ENCODE measurements at regions of chr19 and their contacts with region 1.

Region 1: GRCh38 chr19:49570138-49570856 is 10.1 kb downstream of the NOSIP start:
- DNase-seq: peak; percentile 41 to 82 (median 80)
- H3K4me3 ChIP-seq: no peak overlapping the region
- H3K4me3 Mint-ChIP-seq: peak overlapping the region; percentile 62 to 86 (median 67)
- H3K27ac ChIP-seq: peak overlapping the region; percentile 29
- H3K27ac Mint-ChIP-seq: peak overlapping the region; percentile 87 to 96 (median 94)
- H3K4me1 ChIP-seq: peaks cover 57% of the 10 kb centered on the region
- H3K4me1 Mint-ChIP-seq: peaks cover 42 to 62% (median 56%) of the 10 kb centered on the region in 3 donors
- H3K27me3 ChIP-seq: no peaks in the 10 kb centered on the region
- H3K27me3 Mint-ChIP-seq: no peaks in the 10 kb centered on the region

Region 2: DNA sequence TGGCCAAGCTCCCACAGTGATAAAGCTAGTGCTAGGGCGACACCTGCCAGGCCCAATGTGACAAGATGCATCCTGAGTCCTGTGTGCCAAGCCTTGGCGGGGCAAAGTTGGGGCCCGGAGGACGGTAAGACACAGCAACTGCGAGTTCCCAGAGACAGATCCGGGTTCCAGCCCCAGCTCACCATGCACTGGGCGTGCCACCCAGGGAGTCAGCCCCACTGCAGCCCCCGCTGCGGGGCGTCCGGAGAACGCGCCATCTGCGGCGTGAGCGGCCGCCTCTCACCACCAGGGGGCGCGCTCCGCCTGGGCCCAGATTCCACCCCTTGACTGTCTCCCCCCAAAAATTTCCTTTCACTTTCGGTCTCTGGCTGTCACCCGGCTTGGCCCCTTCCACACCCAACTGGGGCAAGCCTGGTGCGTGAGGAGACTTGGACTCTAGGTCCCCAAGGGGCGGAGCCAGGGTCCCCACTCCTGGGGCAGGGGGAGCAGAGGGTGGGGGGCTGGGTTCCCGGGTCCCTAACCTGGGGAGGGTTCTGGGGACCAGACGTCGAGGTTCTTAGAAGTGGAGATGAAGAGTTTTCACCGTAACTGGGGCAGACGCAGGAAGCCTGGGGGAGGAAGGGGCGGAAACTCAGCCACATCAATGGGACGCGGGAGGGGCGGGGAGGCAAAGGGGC is 96.3 kb before region 1 on chr19 and contains the start of gene FLT3LG:
- CTCF ChIA-PET with region 1: interaction called, 22 read pairs
- POLR2A ChIA-PET with region 1: interaction called, 4 read pairs
- DNase-seq: peak; percentile 84 to 98 (median 92)
- H3K4me3 ChIP-seq: peak within 1 kb of the TSS; percentile 75
- H3K4me3 Mint-ChIP-seq: peak within 1 kb of the TSS; percentile 90 to 98 (median 95)
- H3K27ac ChIP-seq: peak within 1 kb of the TSS; percentile 74
- H3K27ac Mint-ChIP-seq: peak within 1 kb of the TSS; percentile 95 to 100 (median 98)
- H3K4me1 ChIP-seq: peaks cover 61% of the 10 kb centered on the region
- H3K4me1 Mint-ChIP-seq: peaks cover 44 to 65% (median 48%) of the 10 kb centered on the region in 3 donors
- H3K27me3 ChIP-seq: no peaks in the 10 kb centered on the region
- H3K27me3 Mint-ChIP-seq: peaks cover 0 to 4% of the 10 kb centered on the region in 2 donors
- total RNA-seq, gene FLT3LG: 63.9 to 71.5 TPM

Region 3: DNA sequence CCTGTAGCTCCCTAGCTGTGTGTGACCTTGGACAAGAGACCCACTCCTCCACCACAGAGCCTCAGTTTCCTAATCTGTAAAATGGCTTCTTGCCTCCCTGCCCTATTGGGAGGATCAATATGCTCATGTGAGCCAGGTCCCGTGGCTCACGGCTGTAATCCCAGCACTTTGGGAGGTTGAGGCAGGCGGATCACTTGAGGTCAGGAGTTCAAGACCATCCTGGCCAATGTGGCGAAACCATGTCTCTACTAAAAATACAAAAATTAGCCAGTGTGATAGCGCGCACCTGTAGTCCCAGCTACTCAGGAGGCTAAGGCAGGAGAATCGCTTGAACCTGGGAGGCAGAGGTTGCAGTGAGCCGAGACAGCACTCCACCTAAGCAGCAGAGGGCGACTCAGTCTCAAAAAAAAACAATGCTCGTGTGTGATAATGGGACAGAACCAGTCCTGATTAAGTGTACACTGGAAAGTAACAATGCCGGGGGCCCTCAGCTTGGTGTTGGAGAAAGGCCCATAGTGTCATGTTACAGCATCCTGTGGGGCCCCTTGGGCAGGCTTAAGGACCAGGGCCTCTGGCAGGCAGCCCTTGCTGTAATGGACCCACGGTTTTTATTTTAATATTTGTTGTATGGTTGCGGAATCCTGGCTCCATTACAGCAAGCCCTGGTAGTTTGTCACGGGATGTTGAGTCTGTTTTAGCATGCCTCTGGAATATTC is 67.3 kb before region 1 on chr19:
- CTCF ChIA-PET with region 1: interaction called, 6 read pairs
- POLR2A ChIA-PET with region 1: interaction called, 15 read pairs
- DNase-seq: peak in 3 of 5 donors; percentile 21 to 59 (median 59)
- H3K4me3 ChIP-seq: no peak overlapping the region
- H3K4me3 Mint-ChIP-seq: peak overlapping the region in 6 of 7 donors; percentile 5 to 45 (median 24)
- H3K27ac ChIP-seq: no peak overlapping the region
- H3K27ac Mint-ChIP-seq: peak overlapping the region; percentile 88 to 99 (median 96)
- H3K4me1 ChIP-seq: peaks cover 44% of the 10 kb centered on the region
- H3K4me1 Mint-ChIP-seq: peaks cover 38 to 48% (median 44%) of the 10 kb centered on the region in 3 donors
- H3K27me3 ChIP-seq: no peaks in the 10 kb centered on the region
- H3K27me3 Mint-ChIP-seq: peaks cover 0 to 10% of the 10 kb centered on the region in 2 donors

Region 4: GRCh38 chr19:49546825-49547565 is 23.3 kb before region 1 on chr19:
- CTCF ChIA-PET with region 1: interaction called, 128 read pairs
- POLR2A ChIA-PET with region 1: interaction called, 23 read pairs
- DNase-seq: peak; percentile 41 to 76 (median 73)
- H3K4me3 ChIP-seq: peak overlapping the region; percentile 45
- H3K4me3 Mint-ChIP-seq: peak overlapping the region in 6 of 7 donors; percentile 5 to 84 (median 73)
- H3K27ac ChIP-seq: no peak overlapping the region
- H3K27ac Mint-ChIP-seq: peak overlapping the region in 7 of 8 donors; percentile 15 to 85 (median 77)
- H3K4me1 ChIP-seq: peaks cover 52% of the 10 kb centered on the region
- H3K4me1 Mint-ChIP-seq: peaks cover 21 to 30% (median 28%) of the 10 kb centered on the region in 3 donors
- H3K27me3 ChIP-seq: no peaks in the 10 kb centered on the region
- H3K27me3 Mint-ChIP-seq: peaks cover 0 to 1% of the 10 kb centered on the region in 2 donors

Region 5: DNA sequence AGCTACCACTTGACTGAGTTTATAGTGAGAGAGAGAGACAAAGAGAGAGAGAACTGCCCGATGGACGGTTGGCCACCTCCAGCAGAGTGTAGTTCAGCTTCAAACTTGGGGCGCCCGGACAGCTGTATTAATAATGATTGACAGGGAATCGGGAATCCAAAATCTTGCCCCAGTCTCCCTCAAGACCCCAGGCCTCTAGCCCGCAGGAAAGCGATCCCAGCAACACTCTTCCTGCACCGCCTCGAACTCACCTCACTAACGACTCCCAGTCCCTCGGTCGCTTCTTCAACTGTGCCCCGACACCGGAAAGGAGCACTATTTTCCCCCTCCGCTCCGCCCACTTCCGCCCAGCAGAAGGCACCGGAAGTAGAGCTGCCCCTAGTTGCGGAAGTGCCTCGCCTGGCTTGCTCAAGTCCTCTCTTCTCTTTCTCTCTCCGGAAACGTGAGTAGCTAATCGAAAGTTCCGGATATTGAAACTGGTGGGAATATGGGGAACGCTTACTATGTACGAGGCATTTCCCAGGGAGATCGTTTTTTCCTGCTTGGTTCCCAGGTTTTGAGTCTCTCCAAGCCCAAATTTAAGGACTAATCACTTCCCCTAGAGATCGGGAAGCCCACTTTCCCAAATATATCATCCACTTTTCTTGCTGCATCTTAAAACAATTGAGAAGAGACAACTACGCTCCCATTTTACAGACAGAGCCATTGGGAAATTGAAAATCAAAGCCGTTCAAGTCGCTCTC is 10.1 kb after region 1 on chr19 and contains the start of gene NOSIP:
- CTCF ChIA-PET with region 1: interaction called, 29 read pairs
- POLR2A ChIA-PET with region 1: interaction called, 3 read pairs
- DNase-seq: peak; percentile 92 to 97 (median 93)
- H3K4me3 ChIP-seq: peak within 1 kb of the TSS; percentile 93
- H3K4me3 Mint-ChIP-seq: peak within 1 kb of the TSS; percentile 90 to 95 (median 94)
- H3K27ac ChIP-seq: peak within 1 kb of the TSS; percentile 78
- H3K27ac Mint-ChIP-seq: peak within 1 kb of the TSS; percentile 65 to 98 (median 92)
- H3K4me1 ChIP-seq: peaks cover 24% of the 10 kb centered on the region
- H3K4me1 Mint-ChIP-seq: peaks cover 27 to 39% (median 35%) of the 10 kb centered on the region in 3 donors
- H3K27me3 ChIP-seq: no peaks in the 10 kb centered on the region
- H3K27me3 Mint-ChIP-seq: no peaks in the 10 kb centered on the region
- total RNA-seq, gene NOSIP: 62.5 to 64.3 TPM

Measured in CD8-positive, alpha-beta memory T cell (primary cell).